GM13976 (cell line): ENCODE measurements at regions of chr5 and their contacts with region 1.

Region 1: GRCh38 chr5:138178516-138179276 is at the starts of genes BRD8 and KIF20A:
- DNase-seq: peak; percentile 88
- CTCF ChIP-seq: no peak

Region 2: GRCh38 chr5:138408023-138408422 is 229.3 kb after region 1 on chr5:
- in situ Hi-C with region 1: loop called (anchors 25 kb)
- DNase-seq: peak; percentile 60
- CTCF ChIP-seq: no peak

Region 3: GRCh38 chr5:138545919-138546562 is 367.3 kb after region 1 on chr5:
- in situ Hi-C with region 1: no loop called
- DNase-seq: no peak
- CTCF ChIP-seq: no peak